MCF 10A (cell line): ENCODE measurements at regions of chr15 and their contacts with region 1.

Region 1: GRCh38 chr15:63891079-63891767 is 57.5 kb upstream of the HERC1 start:
- DNase-seq: peak; percentile 83
- H3K4me3 Mint-ChIP-seq: no peak overlapping the region
- H3K27ac Mint-ChIP-seq: no peak overlapping the region
- H3K4me1 Mint-ChIP-seq: no peaks in the 10 kb centered on the region
- H3K27me3 Mint-ChIP-seq: no peaks in the 10 kb centered on the region
- CTCF ChIP-seq: peak; percentile 77

Region 2: GRCh38 chr15:63610200-63610841 is 280.9 kb before region 1 on chr15:
- CTCF ChIA-PET with region 1: interaction called, 3 read pairs
- POLR2A ChIA-PET with region 1: no interaction called
- intact Hi-C with region 1: loop called (anchors 2 kb)
- DNase-seq: peak; percentile 78
- H3K4me3 Mint-ChIP-seq: no peak overlapping the region
- H3K27ac Mint-ChIP-seq: no peak overlapping the region
- H3K4me1 Mint-ChIP-seq: peaks cover 7% of the 10 kb centered on the region
- H3K27me3 Mint-ChIP-seq: no peaks in the 10 kb centered on the region
- CTCF ChIP-seq: peak; percentile 50